Right ventricle myocardium superior (tissue), 1 donor: ENCODE measurements at regions of chr20 and their contacts with region 1.

Region 1: DNA sequence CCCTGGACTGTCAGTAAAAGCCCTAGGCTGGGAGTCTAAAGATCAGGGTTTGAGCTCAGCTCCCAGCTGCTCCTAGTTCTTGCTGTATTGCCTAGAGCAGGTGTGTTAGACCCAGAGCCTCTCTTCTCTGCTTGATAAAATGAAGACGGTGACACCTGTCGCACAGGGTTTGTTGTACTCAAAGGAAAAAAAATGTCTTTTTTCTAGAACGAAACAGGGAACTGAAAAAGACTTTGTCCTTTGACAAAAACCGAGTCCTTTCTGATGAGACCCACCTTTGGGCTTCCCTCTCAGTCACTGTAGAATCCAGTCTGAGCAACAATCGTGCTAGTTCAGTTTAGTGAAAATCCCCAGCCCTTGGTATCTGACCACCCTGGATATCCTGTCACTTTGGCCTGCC is 102.1 kb upstream of the LAMP5 start:
- DNase-seq: no peak
- ATAC-seq: no peak

Region 2: DNA sequence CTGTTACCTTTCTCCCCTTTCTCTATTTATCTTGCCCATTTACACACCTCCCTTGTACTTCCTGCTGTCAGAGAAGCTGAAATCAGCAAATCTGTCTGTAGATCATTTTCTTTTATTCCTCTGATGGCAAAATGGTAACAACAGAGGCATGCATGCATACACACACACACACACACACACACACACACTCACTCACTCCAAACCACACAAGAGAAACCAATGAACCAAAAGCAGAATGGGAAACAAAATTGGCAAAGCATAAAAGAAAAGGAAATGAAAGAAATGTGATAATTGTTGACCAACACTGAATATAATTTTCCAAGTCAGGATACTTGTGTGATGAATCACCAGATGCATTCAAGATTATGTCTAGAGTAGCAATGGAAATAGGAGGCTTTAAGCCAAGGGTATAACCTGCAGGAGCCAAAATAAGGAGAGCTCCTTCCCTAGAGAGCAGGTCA is 171.0 kb before region 1 on chr20:
- intact Hi-C with region 1: no loop called
- DNase-seq: no peak
- ATAC-seq: no peak

Region 3: GRCh38 chr20:9301129-9302090 is 110.9 kb before region 1 on chr20:
- intact Hi-C with region 1: no loop called
- DNase-seq: no peak
- ATAC-seq: peak; percentile 86

Region 4: DNA sequence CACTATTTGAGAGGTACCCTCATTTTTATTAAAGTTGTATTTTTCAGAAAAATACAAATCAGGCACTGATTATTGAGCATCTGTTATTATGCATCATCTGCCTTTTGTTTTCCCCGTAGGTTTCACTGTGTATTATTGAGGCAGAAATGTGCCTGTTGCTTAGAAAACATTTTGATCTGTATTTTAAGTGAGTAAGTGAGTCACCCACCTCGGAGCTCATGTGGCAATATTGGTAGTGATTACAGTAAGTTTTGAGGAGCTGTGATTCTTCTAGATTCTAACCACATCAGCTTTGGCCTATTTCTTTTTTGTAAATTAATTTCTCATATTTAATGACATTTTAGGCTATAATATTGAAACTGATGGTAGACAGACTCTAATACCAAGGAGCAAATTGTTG is 42.5 kb after region 1 on chr20:
- intact Hi-C with region 1: no loop called
- DNase-seq: no peak
- ATAC-seq: no peak

Region 5: GRCh38 chr20:9609887-9610502 is 197.7 kb after region 1 on chr20:
- intact Hi-C with region 1: loop called (anchors 5 kb)
- DNase-seq: no peak
- ATAC-seq: peak; percentile 55